Endothelial cell of umbilical vein (primary cell): ENCODE measurements at regions of chr5 and their contacts with region 1.

Region 1: DNA sequence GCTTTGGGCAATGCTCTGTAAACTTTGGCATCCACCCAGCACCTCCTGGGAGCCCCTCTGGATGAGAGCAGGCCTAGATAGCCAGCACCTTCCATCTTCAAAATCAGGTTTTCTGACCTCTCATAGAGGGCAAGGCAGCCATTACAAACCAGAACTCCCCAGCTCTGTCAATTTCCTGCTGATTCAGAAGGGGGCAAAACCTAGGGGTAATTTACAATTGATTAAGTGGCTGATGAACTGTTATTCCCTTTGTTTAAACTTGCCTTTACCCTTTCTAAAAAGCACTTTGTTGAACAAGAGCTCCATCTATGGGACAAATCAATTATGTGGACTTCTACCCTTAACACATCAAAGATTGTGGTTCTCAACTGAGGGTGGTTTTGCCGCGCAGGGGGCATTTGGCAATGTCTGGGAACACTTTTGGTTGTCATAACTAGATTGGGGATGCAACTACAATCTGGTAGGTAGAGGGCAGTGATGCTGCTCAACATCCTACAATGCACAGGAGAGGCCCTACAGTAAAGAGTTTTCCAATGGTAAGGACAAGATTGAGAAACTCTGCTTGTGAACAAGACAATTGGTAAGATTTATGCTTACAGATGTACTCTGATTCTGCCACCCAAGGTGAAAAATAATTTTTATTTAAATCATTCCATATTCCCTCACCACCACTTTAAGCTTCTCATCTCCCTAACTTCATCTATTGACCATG is 184.1 kb downstream of the MARCHF11 start:
- DNase-seq: peak; percentile 67
- H3K4me3 ChIP-seq: no peak overlapping the region
- H3K27ac ChIP-seq: peak overlapping the region; percentile 20
- H3K4me1 ChIP-seq: peaks cover 27% of the 10 kb centered on the region
- H3K27me3 ChIP-seq: peaks cover 0 to 2% of the 10 kb centered on the region in 2 experiments
- CTCF ChIP-seq: peak; percentile 54 to 60
- POLR2A ChIP-seq: no peak

Region 2: GRCh38 chr5:15105796-15106393 is 889.6 kb before region 1 on chr5:
- CTCF ChIA-PET with region 1: interaction called, 218 read pairs
- POLR2A ChIA-PET with region 1: no interaction called
- dilution Hi-C with region 1: no loop called
- intact Hi-C with region 1: loop called (anchors 1 kb)
- DNase-seq: peak; percentile 62
- H3K4me3 ChIP-seq: no peak overlapping the region
- H3K27ac ChIP-seq: no peak overlapping the region
- H3K4me1 ChIP-seq: no peaks in the 10 kb centered on the region
- H3K27me3 ChIP-seq: peaks cover 0 to 7% of the 10 kb centered on the region in 2 experiments
- CTCF ChIP-seq: peak; percentile 77 to 79
- POLR2A ChIP-seq: no peak

Region 3: GRCh38 chr5:15383469-15383868 is 612.0 kb before region 1 on chr5:
- CTCF ChIA-PET with region 1: interaction called, 10 read pairs
- POLR2A ChIA-PET with region 1: no interaction called
- dilution Hi-C with region 1: no loop called
- intact Hi-C with region 1: loop called (anchors 1 kb)
- DNase-seq: peak; percentile 18
- H3K4me3 ChIP-seq: no peak overlapping the region
- H3K27ac ChIP-seq: no peak overlapping the region
- H3K4me1 ChIP-seq: no peaks in the 10 kb centered on the region
- H3K27me3 ChIP-seq: peaks cover 0 to 3% of the 10 kb centered on the region in 2 experiments
- CTCF ChIP-seq: peak; percentile 16 to 26
- POLR2A ChIP-seq: no peak

Region 4: GRCh38 chr5:15574806-15575325 is 420.6 kb before region 1 on chr5:
- CTCF ChIA-PET with region 1: interaction called, 3 read pairs
- POLR2A ChIA-PET with region 1: no interaction called
- dilution Hi-C with region 1: no loop called
- intact Hi-C with region 1: loop called (anchors 10 kb)
- DNase-seq: no peak
- H3K4me3 ChIP-seq: no peak overlapping the region
- H3K27ac ChIP-seq: no peak overlapping the region
- H3K4me1 ChIP-seq: peaks cover 27% of the 10 kb centered on the region
- H3K27me3 ChIP-seq: no peaks in the 10 kb centered on the region
- CTCF ChIP-seq: no peak
- POLR2A ChIP-seq: no peak

Region 5: DNA sequence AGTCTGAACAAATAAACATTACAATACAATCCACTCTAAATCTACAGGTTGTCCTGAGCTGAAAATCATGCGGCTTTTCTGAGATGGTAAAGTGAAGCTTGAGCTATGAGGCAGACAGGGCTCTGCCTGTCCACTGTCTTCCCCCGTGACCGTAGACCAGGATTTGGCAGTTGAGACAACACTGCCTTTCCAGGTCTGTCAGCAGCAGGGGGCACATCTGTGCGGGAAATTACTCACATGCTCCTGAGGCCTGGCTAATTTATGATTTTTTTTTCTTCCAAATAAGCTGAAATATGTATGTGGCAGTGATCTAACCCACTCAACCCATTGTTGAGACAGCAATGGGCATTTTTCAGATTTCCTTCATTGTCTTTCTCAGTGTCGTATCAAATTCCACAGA is 187.6 kb before region 1 on chr5:
- CTCF ChIA-PET with region 1: interaction called, 58 read pairs
- POLR2A ChIA-PET with region 1: no interaction called
- dilution Hi-C with region 1: no loop called
- intact Hi-C with region 1: loop called (anchors 1 kb)
- DNase-seq: peak; percentile 90
- H3K4me3 ChIP-seq: no peak overlapping the region
- H3K27ac ChIP-seq: peak overlapping the region; percentile 35
- H3K4me1 ChIP-seq: peaks cover 15% of the 10 kb centered on the region
- H3K27me3 ChIP-seq: no peaks in the 10 kb centered on the region
- CTCF ChIP-seq: peak; percentile 33 to 47
- POLR2A ChIP-seq: no peak

Region 6: GRCh38 chr5:15850939-15851341 is 144.6 kb before region 1 on chr5:
- CTCF ChIA-PET with region 1: interaction called, 16 read pairs
- POLR2A ChIA-PET with region 1: no interaction called
- dilution Hi-C with region 1: no loop called
- intact Hi-C with region 1: loop called (anchors 1 kb)
- DNase-seq: peak; percentile 97
- H3K4me3 ChIP-seq: peak overlapping the region in 1 of 3 experiments; percentile 49
- H3K27ac ChIP-seq: peak overlapping the region; percentile 80
- H3K4me1 ChIP-seq: peaks cover 37% of the 10 kb centered on the region
- H3K27me3 ChIP-seq: no peaks in the 10 kb centered on the region
- CTCF ChIP-seq: no peak
- POLR2A ChIP-seq: peak; percentile 37

Region 7: GRCh38 chr5:16082053-16082452 is 86.6 kb after region 1 on chr5:
- CTCF ChIA-PET with region 1: no interaction called
- POLR2A ChIA-PET with region 1: no interaction called
- dilution Hi-C with region 1: no loop called
- intact Hi-C with region 1: no loop called
- DNase-seq: no peak
- H3K4me3 ChIP-seq: no peak overlapping the region
- H3K27ac ChIP-seq: no peak overlapping the region
- H3K4me1 ChIP-seq: no peaks in the 10 kb centered on the region
- H3K27me3 ChIP-seq: no peaks in the 10 kb centered on the region
- CTCF ChIP-seq: no peak
- POLR2A ChIP-seq: no peak